ENCODE measurements at regions of chr5 and their contacts with region 1.

Region 1: DNA sequence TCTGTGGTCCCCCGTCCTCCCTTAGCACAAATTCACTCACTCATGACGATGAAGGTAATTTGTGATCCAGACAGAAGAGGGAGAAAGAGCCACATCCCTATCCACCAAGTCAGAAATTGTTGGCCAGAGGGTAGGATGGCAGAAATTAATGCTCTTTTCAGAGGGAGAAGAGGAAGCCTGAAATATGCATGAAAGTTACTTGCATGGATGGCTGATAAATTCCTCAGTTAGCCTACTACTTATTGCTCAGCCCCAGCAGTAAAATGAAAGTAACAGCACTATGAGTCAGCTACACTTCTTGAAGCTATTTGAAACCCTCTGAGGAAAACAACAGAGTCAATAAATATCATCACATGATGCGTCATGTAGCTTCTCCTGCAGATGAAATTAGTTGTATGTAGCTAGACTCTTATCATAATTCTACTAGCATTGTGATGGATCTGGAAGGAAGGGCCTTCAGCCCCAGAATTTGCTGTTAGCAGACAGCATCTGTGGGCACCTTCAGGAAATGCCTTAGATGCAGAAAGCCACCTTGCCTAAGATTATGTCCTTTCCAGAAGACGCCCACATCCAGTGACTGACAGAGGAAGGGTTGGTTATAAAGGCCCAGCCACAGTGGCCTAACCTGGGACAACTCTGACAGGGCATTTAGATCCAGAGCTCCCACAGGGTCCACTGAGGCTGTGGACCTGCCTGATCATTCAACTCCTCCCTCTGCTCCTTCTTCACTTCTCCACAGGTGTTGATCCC is 81.2 kb upstream of the CCDC112 start:
- DNase-seq: peak; percentile 93
- H3K4me3 ChIP-seq: peak overlapping the region; percentile 16
- CTCF ChIP-seq: peak; percentile 53

Region 2: GRCh38 chr5:115575167-115576070 is 197.8 kb after region 1 on chr5:
- CTCF ChIA-PET with region 1: interaction called, 25 read pairs
- POLR2A ChIA-PET with region 1: no interaction called
- DNase-seq: no peak
- H3K4me3 ChIP-seq: no peak overlapping the region
- CTCF ChIP-seq: no peak